ENCODE measurements at regions of chr4 and their contacts with region 1.

Region 1: GRCh38 chr4:146916479-146917076 is 29.1 kb downstream of the TTC29 start:
- DNase-seq: no peak
- ATAC-seq: no peak

Region 2: GRCh38 chr4:146095091-146095690 is 821.4 kb before region 1 on chr4:
- intact Hi-C with region 1: loop called (anchors 10 kb)
- DNase-seq: no peak
- ATAC-seq: no peak

Region 3: DNA sequence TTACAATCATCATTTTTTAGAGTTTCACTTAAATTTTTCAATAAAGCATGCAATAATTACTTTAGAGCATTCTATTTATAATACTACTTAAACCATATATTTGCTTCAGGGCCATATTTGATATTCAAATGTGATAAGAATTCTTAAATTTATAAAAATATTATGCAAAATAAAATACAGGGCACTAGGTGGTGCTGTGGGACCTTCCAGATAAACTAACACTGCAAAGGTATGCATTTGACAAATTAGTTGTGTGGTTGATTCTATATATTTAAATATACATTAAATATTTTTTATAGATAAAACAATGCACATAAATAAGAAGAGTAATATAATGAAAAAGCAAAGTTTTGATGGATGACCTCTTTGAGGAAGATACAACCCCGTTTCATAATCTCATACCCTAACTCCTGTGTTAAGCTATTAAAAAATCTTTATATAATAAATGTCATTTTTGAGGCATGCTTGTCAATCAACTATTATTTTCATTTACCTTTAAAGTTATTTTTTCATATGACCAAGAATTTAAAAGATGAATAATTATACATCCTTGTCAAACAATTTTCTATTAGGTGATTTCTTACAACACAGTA is 573.9 kb before region 1 on chr4:
- intact Hi-C with region 1: loop called (anchors 10 kb)
- DNase-seq: no peak
- ATAC-seq: no peak

Region 4: DNA sequence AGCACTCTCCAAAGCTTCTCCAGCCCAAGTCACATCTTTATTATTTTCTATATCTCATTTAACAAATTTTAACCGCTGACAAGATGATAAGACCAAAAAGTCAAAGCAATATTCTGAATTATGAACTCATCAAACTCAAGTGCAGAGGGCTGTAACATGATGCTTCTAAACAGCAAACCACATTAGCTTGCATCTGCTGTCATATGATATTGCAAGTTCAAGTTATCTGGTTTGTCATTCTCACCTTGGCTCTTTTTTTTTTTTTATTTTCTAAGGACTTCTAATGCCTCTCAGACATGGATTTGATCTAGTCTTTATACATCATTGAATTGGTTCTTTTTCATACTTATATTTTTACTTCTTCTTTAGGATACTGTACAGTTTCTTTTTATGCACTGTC is 488.3 kb before region 1 on chr4:
- intact Hi-C with region 1: no loop called
- DNase-seq: no peak
- ATAC-seq: no peak

Region 5: GRCh38 chr4:146674829-146675570 is 241.6 kb before region 1 on chr4:
- intact Hi-C with region 1: no loop called
- DNase-seq: no peak
- ATAC-seq: no peak

Region 6: GRCh38 chr4:146981651-146982050 is 65.1 kb after region 1 on chr4:
- intact Hi-C with region 1: no loop called
- DNase-seq: no peak
- ATAC-seq: no peak

Region 7: GRCh38 chr4:147103403-147103946 is 186.9 kb after region 1 on chr4:
- intact Hi-C with region 1: no loop called
- DNase-seq: no peak
- ATAC-seq: peak; percentile 98